OCI-LY7 (cell line): ENCODE measurements at regions of chr18 and their contacts with region 1.

Region 1: DNA sequence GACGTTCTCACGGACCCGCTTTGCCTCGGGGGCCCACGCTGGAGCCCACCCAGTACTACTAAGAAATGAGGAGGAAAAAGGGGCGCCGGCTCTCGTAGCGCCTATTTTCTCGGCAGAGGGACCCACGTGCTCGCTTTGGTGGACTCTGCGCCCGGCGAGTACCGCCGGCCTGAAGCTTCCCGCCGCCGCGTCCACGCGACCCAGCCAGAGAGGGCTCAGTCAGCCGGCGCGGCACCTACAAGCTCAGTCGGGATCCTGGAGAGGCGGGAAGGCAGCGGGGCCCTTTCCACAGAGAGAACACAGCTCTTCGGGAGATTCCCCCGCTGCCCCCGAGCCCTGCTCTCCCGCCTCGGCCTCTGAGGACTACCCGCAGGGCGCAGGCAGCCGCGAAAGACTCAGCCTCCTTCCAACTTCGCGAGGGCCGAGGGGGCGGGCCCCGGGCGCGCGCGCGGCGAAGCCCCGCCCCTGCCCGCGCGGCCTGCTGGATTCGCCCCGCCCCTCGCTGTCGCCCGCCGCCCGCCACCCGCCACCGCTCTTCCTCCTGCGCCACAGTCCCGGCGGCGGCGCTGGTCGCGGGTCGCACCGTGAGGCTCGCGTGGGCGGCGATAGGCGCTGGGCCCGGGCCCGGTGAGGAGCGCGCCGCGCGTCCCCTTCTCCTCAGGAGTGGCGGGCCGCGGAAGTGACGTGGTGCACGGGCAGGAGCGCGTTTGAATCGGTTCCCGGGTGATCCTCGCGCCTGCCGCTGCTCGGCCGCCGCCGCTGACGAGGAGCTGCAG is at the start of gene SMCHD1:
- DNase-seq: peak; percentile 87
- H3K4me3 ChIP-seq: peak within 1 kb of the TSS; percentile 97
- H3K27ac ChIP-seq: peak within 1 kb of the TSS; percentile 88
- H3K4me1 ChIP-seq: peaks cover 35% of the 10 kb centered on the region
- CTCF ChIP-seq: no peak
- total RNA-seq, gene SMCHD1: 140 and 164 TPM in 2 replicates

Region 2: GRCh38 chr18:2522112-2522511 is 133.3 kb before region 1 on chr18:
- CTCF ChIA-PET with region 1: no interaction called
- POLR2A ChIA-PET with region 1: no interaction called
- intact Hi-C with region 1: no loop called
- DNase-seq: no peak
- H3K4me3 ChIP-seq: no peak overlapping the region
- H3K27ac ChIP-seq: no peak overlapping the region
- H3K4me1 ChIP-seq: no peaks in the 10 kb centered on the region
- CTCF ChIP-seq: no peak

Region 3: DNA sequence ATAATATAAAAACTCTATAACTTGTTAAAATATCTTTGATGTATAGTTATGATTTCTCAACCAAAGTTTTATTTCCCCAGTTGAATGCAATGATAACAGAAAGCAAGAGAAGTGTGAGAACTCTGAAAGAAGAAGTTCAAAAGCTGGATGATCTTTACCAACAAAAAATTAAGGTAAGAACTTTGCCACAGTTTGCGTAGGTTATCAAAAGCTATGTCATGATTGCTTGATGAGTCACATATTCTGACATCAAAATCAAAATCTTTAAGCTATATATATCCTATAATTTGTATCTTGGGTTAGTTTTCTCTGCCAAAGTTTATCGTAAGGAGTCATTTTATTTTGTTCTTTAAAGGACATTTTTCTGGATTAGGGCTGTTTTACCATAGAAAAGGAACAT is 49.0 kb before region 1 on chr18:
- CTCF ChIA-PET with region 1: no interaction called
- POLR2A ChIA-PET with region 1: interaction called, 10 read pairs
- intact Hi-C with region 1: no loop called
- DNase-seq: no peak
- H3K4me3 ChIP-seq: no peak overlapping the region
- H3K27ac ChIP-seq: no peak overlapping the region
- H3K4me1 ChIP-seq: peaks cover 14% of the 10 kb centered on the region
- CTCF ChIP-seq: no peak

Region 4: GRCh38 chr18:2641638-2642037 is 13.7 kb before region 1 on chr18:
- CTCF ChIA-PET with region 1: interaction called, 4 read pairs
- POLR2A ChIA-PET with region 1: interaction called, 29 read pairs
- intact Hi-C with region 1: loop called (anchors 1 kb)
- DNase-seq: peak; percentile 85
- H3K4me3 ChIP-seq: peak overlapping the region; percentile 57
- H3K27ac ChIP-seq: peak overlapping the region; percentile 84
- H3K4me1 ChIP-seq: peaks cover 83% of the 10 kb centered on the region
- CTCF ChIP-seq: no peak

Region 5: DNA sequence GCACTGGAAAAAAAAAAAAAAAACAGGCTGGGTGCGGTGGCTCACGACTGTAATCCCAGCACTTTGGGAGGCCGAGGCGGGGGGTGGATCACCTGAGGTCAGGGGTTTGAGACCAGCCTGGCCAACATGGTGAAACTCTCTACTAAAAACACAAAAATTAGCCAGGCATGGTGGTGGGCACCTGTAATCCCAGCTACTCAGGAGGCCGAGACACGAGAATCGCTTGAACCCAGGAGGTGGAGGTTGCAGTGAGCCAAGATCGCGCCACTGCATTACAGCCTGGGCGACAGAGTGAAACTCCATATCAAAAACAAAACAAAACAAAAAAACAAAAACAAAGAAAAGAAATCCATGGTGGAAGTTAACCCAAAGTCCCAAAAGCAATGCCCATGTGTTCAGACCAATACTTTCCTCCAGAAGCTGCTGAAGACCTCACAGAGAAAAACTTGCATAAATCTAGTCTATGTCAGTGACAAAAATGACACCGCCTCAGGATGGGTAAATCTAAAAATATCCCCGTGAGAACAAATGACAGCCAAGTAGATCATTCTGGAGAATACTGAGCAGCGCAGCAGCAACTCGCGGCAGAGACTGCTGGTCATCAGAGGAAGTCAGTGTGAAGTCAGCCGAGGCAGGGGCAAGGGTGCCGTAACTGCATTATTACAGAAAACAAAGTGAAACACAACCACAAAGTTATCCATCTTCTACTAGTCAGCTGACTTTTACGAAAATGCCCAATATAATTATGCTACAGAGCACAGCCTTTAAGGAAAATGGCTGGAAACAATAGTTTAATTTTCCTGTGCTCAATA is 316.6 kb after region 1 on chr18:
- CTCF ChIA-PET with region 1: no interaction called
- POLR2A ChIA-PET with region 1: no interaction called
- intact Hi-C with region 1: loop called (anchors 10 kb)
- DNase-seq: peak; percentile 45
- H3K4me3 ChIP-seq: no peak overlapping the region
- H3K27ac ChIP-seq: no peak overlapping the region
- H3K4me1 ChIP-seq: peaks cover 25% of the 10 kb centered on the region
- CTCF ChIP-seq: no peak

Region 6: DNA sequence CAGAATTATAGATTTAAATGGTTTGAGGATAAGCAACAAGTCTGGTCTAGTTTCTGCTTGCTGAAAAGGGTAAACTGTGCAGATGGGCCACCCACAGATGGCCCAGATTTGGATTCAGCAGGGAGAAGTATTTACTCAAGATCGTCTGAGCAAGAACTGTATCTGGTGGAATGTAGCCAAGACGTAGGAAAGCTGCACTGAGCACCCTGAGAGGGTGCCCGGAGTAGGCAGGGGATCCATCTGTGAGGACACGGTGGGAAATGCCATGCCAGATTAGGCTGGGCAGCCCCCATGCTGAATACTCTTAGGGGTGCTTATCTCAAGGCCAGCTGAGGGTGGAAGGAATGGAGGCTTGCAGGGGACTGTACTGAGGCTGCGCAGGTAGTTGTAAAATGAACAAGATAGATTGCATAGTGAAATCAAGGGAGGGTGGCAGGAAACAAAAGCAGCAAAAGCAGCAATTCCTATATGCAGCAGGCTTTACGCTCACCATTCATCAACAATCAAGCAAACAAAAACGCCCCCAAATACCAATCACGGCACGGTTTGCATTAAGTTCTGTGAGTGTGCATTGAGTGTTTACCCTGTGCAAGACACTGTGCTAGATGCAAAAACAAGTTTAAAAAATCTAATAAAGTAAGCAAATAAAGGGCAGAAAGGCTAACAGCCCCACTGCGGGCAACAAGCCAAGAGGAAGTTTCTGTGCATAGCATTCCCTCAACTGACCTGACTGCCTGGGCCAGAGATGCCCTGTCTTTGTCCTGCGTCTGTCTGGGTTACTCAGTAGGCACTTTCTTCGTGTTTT is 389.7 kb after region 1 on chr18:
- CTCF ChIA-PET with region 1: no interaction called
- POLR2A ChIA-PET with region 1: no interaction called
- intact Hi-C with region 1: no loop called
- DNase-seq: no peak
- H3K4me3 ChIP-seq: no peak overlapping the region
- H3K27ac ChIP-seq: no peak overlapping the region
- H3K4me1 ChIP-seq: no peaks in the 10 kb centered on the region
- CTCF ChIP-seq: no peak

Region 7: DNA sequence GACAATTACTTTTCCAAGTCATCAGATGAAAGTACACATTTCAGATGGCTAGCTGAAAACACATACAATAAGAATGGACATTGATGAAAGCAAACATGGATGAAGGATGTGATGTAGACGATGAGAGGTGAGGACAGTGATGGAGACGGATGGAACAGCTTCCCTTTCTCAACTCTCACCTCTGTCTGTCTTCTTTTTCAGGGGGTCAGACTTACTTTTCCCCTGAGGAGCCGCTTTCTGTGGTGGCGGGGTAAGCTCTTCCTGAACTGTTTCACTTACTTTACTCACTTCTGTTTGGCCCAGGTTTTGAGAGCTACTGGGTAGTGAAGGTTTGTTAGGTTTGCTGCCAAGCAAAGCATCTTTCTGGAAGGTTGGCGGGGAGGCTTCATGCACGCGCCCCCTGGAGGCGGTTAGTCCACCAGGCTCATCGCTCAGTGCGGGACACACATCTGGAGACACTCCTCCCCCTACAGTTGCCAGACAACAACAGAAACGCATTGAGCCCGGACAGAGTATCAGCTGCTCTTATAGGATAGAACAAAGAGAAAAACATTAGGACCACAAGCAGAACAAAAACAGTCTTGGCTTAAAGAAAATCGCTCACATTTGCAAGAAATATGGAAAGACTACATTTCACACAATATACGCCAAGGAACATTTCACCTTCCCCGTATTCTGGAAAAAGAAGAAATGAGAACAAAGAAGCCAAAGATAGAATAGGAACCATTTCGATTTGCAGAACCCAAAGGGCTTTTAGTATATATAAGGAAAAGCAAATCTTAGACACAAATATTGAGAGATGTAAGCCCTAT is 473.9 kb after region 1 on chr18:
- CTCF ChIA-PET with region 1: no interaction called
- POLR2A ChIA-PET with region 1: no interaction called
- intact Hi-C with region 1: no loop called
- DNase-seq: peak; percentile 90
- H3K4me3 ChIP-seq: peak overlapping the region; percentile 6
- H3K27ac ChIP-seq: no peak overlapping the region
- H3K4me1 ChIP-seq: peaks cover 10% of the 10 kb centered on the region
- CTCF ChIP-seq: peak; percentile 99

Region 8: GRCh38 chr18:3261371-3262246 is 606.2 kb after region 1 on chr18 and contains the start of gene MYL12B:
- CTCF ChIA-PET with region 1: no interaction called
- POLR2A ChIA-PET with region 1: no interaction called
- intact Hi-C with region 1: loop called (anchors 5 kb)
- DNase-seq: peak; percentile 88
- H3K4me3 ChIP-seq: peak within 1 kb of the TSS; percentile 86
- H3K27ac ChIP-seq: peak within 1 kb of the TSS; percentile 81
- H3K4me1 ChIP-seq: peaks cover 62% of the 10 kb centered on the region
- CTCF ChIP-seq: no peak
- total RNA-seq, gene MYL12B: 240 and 260 TPM in 2 replicates